HepG2 (cell line): ENCODE measurements at regions of chr12 and their contacts with region 1.

Region 1: DNA sequence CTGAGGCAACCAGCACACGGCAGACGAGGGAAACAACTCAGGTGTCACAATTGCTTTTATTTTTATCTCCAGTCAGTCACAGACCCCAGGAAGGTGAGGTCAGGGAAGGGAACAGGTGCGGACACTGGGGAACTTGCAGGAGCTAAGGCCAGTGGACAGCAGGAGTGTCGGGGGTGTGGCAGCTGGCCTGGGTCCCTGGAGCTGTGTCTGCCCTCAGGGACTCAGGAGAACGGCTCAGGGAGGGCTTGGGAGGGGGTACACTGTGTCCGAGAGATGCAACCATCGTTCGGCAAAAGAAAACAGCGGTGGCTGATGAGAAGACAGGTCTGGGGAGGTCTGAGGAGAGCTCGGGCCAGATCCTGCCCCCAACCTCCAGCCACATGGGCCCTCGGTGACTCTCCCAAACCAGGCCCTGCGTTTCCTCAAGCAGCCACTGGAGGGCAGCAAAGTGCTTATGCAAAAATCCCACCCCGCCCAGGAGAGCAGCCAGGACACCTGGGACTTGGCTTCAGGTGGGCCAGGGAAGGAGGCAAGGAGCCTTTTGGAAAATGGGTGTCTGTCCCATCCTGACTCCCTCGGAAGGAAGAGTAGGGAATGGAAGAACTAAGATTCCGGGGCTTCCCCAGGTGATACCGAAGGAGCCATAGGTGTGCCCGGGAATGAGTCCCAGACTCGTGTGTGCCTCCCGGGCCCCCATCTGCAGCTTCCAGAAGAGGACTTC is 24.1 kb upstream of the BCDIN3D start:
- DNase-seq: peak; percentile 43
- ATAC-seq: peak; percentile 86
- H3K4me3 ChIP-seq: peak overlapping the region in 1 of 3 experiments; percentile 44; a peak in 1 of 6 replicates
- H3K27ac ChIP-seq: no peak overlapping the region
- H3K4me1 ChIP-seq: peaks cover 37% of the 10 kb centered on the region
- H3K27me3 ChIP-seq: peaks cover 2 to 43% of the 10 kb centered on the region in 2 experiments; a peak in 3 of 5 replicates
- CTCF ChIP-seq: peak; percentile 95
- EP300 ChIP-seq: no peak
- POLR2A ChIP-seq: no peak
- RAD21 ChIP-seq: peak; percentile 77

Region 2: GRCh38 chr12:49776413-49776812 is 90.6 kb before region 1 on chr12:
- CTCF ChIA-PET with region 1: interaction called, 7 read pairs
- POLR2A ChIA-PET with region 1: no interaction called
- in situ Hi-C with region 1: no loop called
- intact Hi-C with region 1: loop called (anchors 1 kb)
- DNase-seq: peak; percentile 66
- ATAC-seq: peak; percentile 91
- H3K4me3 ChIP-seq: no peak overlapping the region
- H3K27ac ChIP-seq: no peak overlapping the region
- H3K4me1 ChIP-seq: peaks cover 16% of the 10 kb centered on the region
- H3K27me3 ChIP-seq: peaks cover 0 to 4% of the 10 kb centered on the region in 2 experiments; a peak in 1 of 5 replicates
- CTCF ChIP-seq: peak; percentile 94
- EP300 ChIP-seq: no peak
- POLR2A ChIP-seq: no peak
- RAD21 ChIP-seq: peak; percentile 86

Region 3: GRCh38 chr12:49893753-49894752 is 27.0 kb after region 1 on chr12:
- CTCF ChIA-PET with region 1: no interaction called
- POLR2A ChIA-PET with region 1: no interaction called
- in situ Hi-C with region 1: no loop called
- intact Hi-C with region 1: loop called (anchors 1 kb)
- DNase-seq: no peak
- ATAC-seq: no peak
- H3K4me3 ChIP-seq: no peak overlapping the region
- H3K27ac ChIP-seq: no peak overlapping the region
- H3K4me1 ChIP-seq: peaks cover 4% of the 10 kb centered on the region
- H3K27me3 ChIP-seq: peaks cover 6 to 50% of the 10 kb centered on the region in 2 experiments
- CTCF ChIP-seq: no peak
- EP300 ChIP-seq: no peak
- POLR2A ChIP-seq: no peak
- RAD21 ChIP-seq: no peak

Region 4: DNA sequence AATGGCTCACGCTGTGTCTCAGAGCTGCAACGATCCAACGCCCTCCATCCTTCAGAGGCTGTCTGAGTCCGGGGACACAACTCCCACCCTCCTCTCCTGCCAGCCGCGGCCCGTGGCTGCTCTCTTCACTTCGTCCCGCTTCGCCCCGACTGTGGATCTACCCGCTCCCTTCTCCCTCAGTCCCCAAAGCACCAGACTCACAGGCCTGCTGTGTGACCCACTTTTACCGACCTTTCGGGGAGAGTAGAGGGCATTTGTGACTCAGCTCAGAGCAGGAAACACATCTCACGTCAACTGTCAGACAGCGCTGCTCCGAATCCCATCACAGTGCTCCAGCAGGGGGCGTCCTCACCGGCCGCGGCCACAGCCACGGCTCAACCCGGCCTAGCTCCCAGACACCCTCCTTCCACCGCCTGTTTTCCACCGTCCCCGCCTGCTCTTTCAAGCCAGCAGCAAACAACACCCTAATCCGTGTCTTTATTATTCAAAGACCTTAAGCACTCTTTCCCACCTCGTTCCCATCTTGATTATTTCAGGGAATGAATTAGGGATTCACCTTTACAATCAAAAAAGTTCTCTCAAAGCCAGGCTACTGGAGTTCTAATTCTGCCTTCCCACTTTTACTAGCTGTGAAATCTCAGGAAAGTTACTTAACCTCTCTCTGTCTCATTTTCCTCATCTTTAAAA is 78.5 kb after region 1 on chr12:
- CTCF ChIA-PET with region 1: interaction called, 4 read pairs
- POLR2A ChIA-PET with region 1: no interaction called
- in situ Hi-C with region 1: loop called (anchors 5 kb)
- intact Hi-C with region 1: loop called (anchors 10 kb)
- DNase-seq: peak; percentile 37
- ATAC-seq: peak; percentile 96
- H3K4me3 ChIP-seq: peak overlapping the region in 2 of 3 experiments; percentile 48 to 64; a peak in 4 of 6 replicates
- H3K27ac ChIP-seq: no peak overlapping the region
- H3K4me1 ChIP-seq: peaks cover 22% of the 10 kb centered on the region
- H3K27me3 ChIP-seq: peaks cover 4 to 9% of the 10 kb centered on the region in 2 experiments; a peak in 3 of 5 replicates
- CTCF ChIP-seq: peak; percentile 94
- EP300 ChIP-seq: no peak
- POLR2A ChIP-seq: no peak
- RAD21 ChIP-seq: peak; percentile 29; the same call in 1 of the 2 replicates

Region 5: DNA sequence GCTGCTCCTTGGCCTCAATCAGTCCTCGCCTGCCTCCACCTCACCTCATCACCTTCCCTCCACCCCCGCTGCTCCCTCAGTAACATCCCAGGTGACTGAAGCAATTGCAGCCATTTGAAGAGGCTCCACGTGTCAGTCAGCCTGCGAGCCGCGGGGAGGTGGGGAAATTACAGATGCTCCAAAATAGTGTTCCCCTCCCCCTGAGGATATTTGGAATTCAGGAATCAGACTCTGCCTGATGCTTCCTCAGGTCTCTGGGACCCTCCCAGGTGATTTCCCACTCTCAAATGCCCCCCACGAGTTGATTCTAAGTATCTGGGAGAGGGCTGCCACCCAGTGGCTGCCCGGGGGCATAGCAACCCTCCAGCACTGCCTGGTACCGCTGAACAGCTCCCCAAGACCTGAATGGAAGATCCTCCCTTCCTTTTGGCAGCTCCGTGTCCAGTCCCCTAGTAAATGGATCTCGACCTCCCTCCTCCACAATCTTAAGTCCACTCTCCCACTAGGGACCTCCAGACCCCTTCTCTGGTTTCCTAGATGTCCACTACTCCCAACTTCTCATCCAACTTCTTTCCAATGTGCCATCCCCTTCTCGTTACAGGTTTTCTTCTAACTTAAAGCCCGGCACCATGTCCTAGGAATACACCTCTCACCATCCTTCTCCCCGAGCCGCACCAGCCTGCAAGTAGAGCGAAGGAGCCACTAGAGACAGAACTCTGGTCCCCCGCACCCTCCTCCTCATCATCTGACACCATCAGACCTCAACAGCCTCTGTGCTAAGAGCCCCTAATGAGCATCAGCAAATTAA is 189.0 kb after region 1 on chr12:
- CTCF ChIA-PET with region 1: no interaction called
- POLR2A ChIA-PET with region 1: no interaction called
- in situ Hi-C with region 1: loop called (anchors 10 kb)
- intact Hi-C with region 1: no loop called
- DNase-seq: peak; percentile 30
- ATAC-seq: peak; percentile 61
- H3K4me3 ChIP-seq: peak overlapping the region in 1 of 3 experiments; percentile 46; a peak in 2 of 6 replicates
- H3K27ac ChIP-seq: no peak overlapping the region
- H3K4me1 ChIP-seq: peaks cover 34% of the 10 kb centered on the region
- H3K27me3 ChIP-seq: peaks cover 9 to 59% of the 10 kb centered on the region in 2 experiments; a peak in 4 of 5 replicates
- CTCF ChIP-seq: peak; percentile 91
- EP300 ChIP-seq: no peak
- POLR2A ChIP-seq: no peak
- RAD21 ChIP-seq: peak; percentile 86